Activated CD4-positive, alpha-beta memory T cell treated with anti-CD3 and anti-CD28 coated beads for 36 hours (primary cell): ENCODE measurements at regions of chr14 and their contacts with region 1.

Region 1: DNA sequence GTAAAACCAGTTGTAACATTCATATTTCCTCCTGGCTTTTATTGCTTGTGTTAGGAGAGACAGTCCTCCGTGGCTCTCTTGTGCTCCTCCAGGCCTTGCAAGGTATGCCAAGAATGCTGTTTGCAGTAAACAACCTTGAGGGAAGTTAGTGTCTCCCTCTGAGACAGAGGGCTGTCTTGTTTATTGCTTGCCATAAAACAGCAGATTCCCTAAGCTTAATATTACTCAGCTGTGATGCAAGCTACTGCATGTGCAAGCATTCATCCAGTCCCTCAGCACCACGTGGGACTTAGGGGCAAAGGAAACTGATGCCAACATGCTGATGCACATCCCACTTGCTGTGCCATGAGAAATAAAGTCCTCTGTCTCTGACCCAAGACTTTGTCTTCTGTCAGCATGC is 6.6 kb downstream of the POMT2 start:
- DNase-seq: no peak
- H3K4me3 Mint-ChIP-seq: no peak overlapping the region
- H3K27ac Mint-ChIP-seq: no peak overlapping the region
- H3K4me1 Mint-ChIP-seq: no peaks in the 10 kb centered on the region
- H3K27me3 Mint-ChIP-seq: no peaks in the 10 kb centered on the region

Region 2: GRCh38 chr14:76968621-76969063 is 345.4 kb before region 1 on chr14:
- CTCF ChIA-PET with region 1: no interaction called
- POLR2A ChIA-PET with region 1: no interaction called
- intact Hi-C with region 1: no loop called
- DNase-seq: no peak
- H3K4me3 Mint-ChIP-seq: no peak overlapping the region
- H3K27ac Mint-ChIP-seq: no peak overlapping the region
- H3K4me1 Mint-ChIP-seq: peaks cover 21% of the 10 kb centered on the region
- H3K27me3 Mint-ChIP-seq: peaks cover 3% of the 10 kb centered on the region

Region 3: DNA sequence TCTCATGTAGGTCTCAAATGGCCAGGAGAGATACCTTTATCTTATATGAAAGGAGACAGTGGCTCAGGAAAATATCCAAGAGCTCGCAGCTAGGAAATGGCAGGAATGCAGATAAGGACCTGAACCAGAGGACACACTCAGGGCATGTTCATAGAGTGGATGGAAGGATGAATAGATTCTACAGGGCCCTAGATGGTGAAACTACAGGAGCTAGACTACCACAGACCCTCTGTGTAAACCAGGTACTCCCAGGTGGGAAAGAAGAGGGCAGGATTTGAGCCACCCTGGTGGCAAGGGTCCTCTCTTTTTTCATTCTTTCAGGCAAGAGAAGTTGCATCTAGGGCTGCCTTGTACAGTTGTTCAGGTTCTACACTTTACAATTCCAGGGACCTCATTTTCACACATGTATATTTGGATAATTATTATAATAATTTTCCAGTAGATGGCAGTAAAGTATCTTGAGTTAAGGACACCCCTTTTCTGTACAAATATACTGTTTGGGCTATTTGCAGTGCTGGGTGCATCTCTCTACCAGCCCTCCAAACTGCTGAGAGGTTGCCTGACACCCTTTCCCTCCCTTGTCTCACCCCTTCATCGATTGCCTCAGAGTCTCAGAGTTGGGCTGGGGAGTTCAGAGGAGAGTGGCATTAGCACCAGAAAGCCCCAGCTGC is 162.0 kb before region 1 on chr14:
- CTCF ChIA-PET with region 1: interaction called, 159 read pairs
- POLR2A ChIA-PET with region 1: no interaction called
- intact Hi-C with region 1: loop called (anchors 1 kb)
- DNase-seq: no peak
- H3K4me3 Mint-ChIP-seq: no peak overlapping the region
- H3K27ac Mint-ChIP-seq: no peak overlapping the region
- H3K4me1 Mint-ChIP-seq: no peaks in the 10 kb centered on the region
- H3K27me3 Mint-ChIP-seq: peaks cover 31% of the 10 kb centered on the region

Region 4: GRCh38 chr14:77284466-77284865 is 29.6 kb before region 1 on chr14:
- CTCF ChIA-PET with region 1: interaction called, 12 read pairs
- POLR2A ChIA-PET with region 1: no interaction called
- intact Hi-C with region 1: no loop called
- DNase-seq: no peak
- H3K4me3 Mint-ChIP-seq: no peak overlapping the region
- H3K27ac Mint-ChIP-seq: no peak overlapping the region
- H3K4me1 Mint-ChIP-seq: no peaks in the 10 kb centered on the region
- H3K27me3 Mint-ChIP-seq: no peaks in the 10 kb centered on the region

Region 5: DNA sequence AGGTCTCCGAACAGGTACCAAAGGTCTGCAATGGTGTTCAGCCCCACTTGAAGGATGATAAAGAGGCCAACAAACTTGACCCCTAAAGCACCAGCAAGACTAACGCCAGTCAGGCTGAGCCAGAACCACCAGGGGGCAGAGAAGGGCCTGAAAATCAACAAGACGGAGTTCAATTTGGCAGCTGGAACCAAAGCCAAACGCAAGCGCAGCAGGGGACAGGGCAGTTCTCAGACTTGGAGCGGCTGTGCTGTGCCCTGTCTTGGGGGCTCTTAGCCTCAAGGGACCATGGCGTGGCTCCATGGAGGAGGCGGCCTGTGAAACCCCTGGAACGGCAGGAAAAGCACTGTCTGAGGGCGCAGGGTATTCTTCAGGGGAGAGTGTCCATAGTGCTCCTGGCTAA is 12.9 kb before region 1 on chr14:
- CTCF ChIA-PET with region 1: interaction called, 321 read pairs
- POLR2A ChIA-PET with region 1: interaction called, 15 read pairs
- intact Hi-C with region 1: loop called (anchors 1 kb)
- DNase-seq: peak; percentile 78
- H3K4me3 Mint-ChIP-seq: no peak overlapping the region
- H3K27ac Mint-ChIP-seq: no peak overlapping the region
- H3K4me1 Mint-ChIP-seq: peaks cover 24% of the 10 kb centered on the region
- H3K27me3 Mint-ChIP-seq: no peaks in the 10 kb centered on the region

Region 6: DNA sequence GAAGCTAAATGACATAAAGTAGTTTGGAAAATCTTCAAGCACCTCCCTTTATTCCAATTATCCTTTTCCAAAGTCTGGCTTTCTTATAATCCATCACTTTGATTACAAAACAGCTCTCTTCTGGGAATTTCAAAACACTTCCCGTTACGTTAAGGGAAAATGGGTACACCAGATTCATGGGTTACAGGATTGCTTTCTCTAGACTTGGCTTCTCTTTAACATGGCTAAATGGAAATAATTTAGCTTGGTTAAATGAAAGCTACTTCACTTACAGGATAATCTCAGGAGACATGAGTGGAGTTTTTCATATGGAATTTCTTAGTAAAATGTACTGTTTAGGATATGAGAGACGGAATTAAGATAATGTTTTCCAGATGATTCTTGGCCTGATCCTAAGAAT is 21.5 kb after region 1 on chr14:
- CTCF ChIA-PET with region 1: interaction called, 11 read pairs
- POLR2A ChIA-PET with region 1: no interaction called
- intact Hi-C with region 1: no loop called
- DNase-seq: no peak
- H3K4me3 Mint-ChIP-seq: no peak overlapping the region
- H3K27ac Mint-ChIP-seq: no peak overlapping the region
- H3K4me1 Mint-ChIP-seq: no peaks in the 10 kb centered on the region
- H3K27me3 Mint-ChIP-seq: no peaks in the 10 kb centered on the region